H1 (cell line): ENCODE measurements at regions of chr15 and their contacts with region 1.

Region 1: DNA sequence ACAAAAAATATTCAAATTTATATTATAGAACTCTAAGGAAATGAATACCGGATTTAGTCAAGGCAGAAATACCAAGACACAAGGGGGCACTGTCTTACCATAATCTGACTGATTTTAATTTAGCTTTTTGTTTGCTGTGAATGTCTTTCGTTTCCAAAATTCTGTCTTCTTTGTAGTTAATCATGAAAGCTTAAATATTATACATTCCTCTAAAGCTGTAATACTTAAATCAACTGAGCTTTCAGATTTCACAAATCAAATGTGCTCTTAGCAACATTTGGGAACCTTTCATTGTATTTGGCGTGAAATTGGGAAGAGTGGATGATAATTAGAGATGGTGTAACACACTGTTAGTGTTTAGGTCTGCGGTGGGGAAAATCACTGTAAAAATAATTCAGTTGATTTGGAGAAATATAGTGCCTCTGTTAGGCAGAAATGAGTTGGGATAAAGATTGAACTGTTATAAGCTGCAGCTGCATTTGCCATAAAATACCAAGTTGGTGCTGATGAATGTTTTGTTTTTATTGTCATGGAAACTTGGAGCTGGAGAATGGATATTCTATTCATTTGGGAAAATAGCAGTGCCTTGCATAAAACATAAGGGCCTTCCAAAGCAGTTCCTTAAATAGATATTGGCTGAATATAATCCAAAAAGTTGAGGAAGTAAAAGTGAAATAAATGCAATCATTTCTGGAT is 228.2 kb downstream of the TCF12 start:
- DNase-seq: no peak
- H3K4me3 ChIP-seq: no peak overlapping the region
- H3K27ac ChIP-seq: no peak overlapping the region
- H3K4me1 ChIP-seq: no peaks in the 10 kb centered on the region; a peak in 3 of 7 replicates
- H3K27me3 ChIP-seq: no peaks in the 10 kb centered on the region
- CTCF ChIP-seq: peak in 2 of 3 experiments; percentile 47 to 51; a peak in 2 of 4 replicates
- EP300 ChIP-seq: no peak
- POLR2A ChIP-seq: no peak
- RAD21 ChIP-seq: peak; percentile 75 to 86

Region 2: DNA sequence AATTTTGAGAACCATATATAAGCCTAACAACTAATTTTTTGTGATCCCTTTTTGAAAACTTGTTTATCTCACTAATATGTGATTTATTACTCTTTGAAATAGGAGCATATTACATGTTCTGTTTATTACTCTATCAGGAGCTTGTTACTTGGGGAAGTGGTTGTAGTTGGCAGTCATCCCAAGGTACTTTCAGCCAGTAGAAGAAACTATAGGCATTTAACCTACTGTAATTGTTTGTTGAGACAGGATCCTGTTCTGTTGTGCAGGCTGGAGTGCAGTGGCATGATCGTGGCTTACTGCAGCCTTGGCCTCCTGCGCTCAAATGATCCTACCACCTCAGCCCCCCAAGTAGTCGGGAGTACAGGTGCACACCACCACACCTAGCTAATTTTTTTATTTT is 32.6 kb before region 1 on chr15:
- CTCF ChIA-PET with region 1: no interaction called
- POLR2A ChIA-PET with region 1: no interaction called
- DNase-seq: no peak
- H3K4me3 ChIP-seq: no peak overlapping the region
- H3K27ac ChIP-seq: no peak overlapping the region
- H3K4me1 ChIP-seq: peaks cover 0 to 10% (median 4%) of the 10 kb centered on the region in 4 experiments; a peak in 3 of 7 replicates
- H3K27me3 ChIP-seq: no peaks in the 10 kb centered on the region
- CTCF ChIP-seq: no peak
- EP300 ChIP-seq: no peak
- POLR2A ChIP-seq: no peak
- RAD21 ChIP-seq: no peak

Region 3: DNA sequence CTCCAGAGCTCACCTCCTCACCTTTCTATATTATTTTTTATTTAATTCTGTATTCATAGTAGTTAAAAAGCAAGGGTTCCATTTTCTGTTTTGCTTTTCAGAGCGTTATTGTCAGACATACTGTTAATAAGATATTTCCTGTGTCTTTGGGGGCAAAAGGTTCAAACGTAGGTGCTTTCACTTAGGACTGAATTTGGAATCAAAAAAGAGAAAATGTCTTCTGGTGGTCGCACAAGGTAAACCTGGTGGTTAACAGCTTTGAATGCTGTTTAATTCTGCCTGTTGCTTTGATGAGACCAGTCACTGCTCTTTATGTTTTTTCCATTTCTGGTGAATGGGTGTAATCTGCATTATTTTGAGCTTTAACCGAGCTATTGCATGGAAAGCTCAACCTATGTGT is 15.7 kb before region 1 on chr15:
- CTCF ChIA-PET with region 1: interaction called, 11 read pairs
- POLR2A ChIA-PET with region 1: no interaction called
- DNase-seq: no peak
- H3K4me3 ChIP-seq: no peak overlapping the region
- H3K27ac ChIP-seq: no peak overlapping the region
- H3K4me1 ChIP-seq: peaks cover 2 to 26% (median 13%) of the 10 kb centered on the region in 4 experiments
- H3K27me3 ChIP-seq: no peaks in the 10 kb centered on the region
- CTCF ChIP-seq: no peak
- EP300 ChIP-seq: no peak
- POLR2A ChIP-seq: no peak
- RAD21 ChIP-seq: no peak

Region 4: GRCh38 chr15:57158589-57158988 is 11.9 kb after region 1 on chr15:
- CTCF ChIA-PET with region 1: interaction called, 17 read pairs
- POLR2A ChIA-PET with region 1: interaction called, 5 read pairs
- DNase-seq: no peak
- H3K4me3 ChIP-seq: no peak overlapping the region
- H3K27ac ChIP-seq: no peak overlapping the region
- H3K4me1 ChIP-seq: peaks cover 0 to 3% (median 0%) of the 10 kb centered on the region in 4 experiments; a peak in 3 of 7 replicates
- H3K27me3 ChIP-seq: no peaks in the 10 kb centered on the region
- CTCF ChIP-seq: no peak
- EP300 ChIP-seq: no peak
- POLR2A ChIP-seq: no peak
- RAD21 ChIP-seq: no peak

Region 5: DNA sequence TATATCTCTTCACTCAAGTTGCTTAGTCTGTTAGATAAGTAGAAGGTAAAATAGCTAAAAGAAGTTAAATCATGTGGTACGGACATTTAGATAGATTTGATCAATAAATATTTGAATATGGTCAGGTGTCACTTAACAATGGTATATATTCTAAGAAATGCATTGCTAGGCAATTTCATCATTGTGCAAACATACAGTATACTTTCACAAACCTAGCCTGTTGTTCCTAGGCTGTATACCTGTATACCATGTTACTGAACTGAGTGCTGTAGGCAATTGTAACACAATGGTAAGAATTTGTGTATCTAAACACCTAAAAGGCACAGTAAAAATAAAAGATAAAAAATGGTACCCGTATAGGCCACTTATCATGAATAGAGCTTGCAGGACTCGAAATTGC is 116.9 kb after region 1 on chr15:
- CTCF ChIA-PET with region 1: interaction called, 10 read pairs
- POLR2A ChIA-PET with region 1: interaction called, 3 read pairs
- DNase-seq: no peak
- H3K4me3 ChIP-seq: no peak overlapping the region
- H3K27ac ChIP-seq: no peak overlapping the region
- H3K4me1 ChIP-seq: peaks cover 0 to 2% (median 0%) of the 10 kb centered on the region in 4 experiments; a peak in 1 of 7 replicates
- H3K27me3 ChIP-seq: no peaks in the 10 kb centered on the region
- CTCF ChIP-seq: no peak
- EP300 ChIP-seq: no peak
- POLR2A ChIP-seq: no peak
- RAD21 ChIP-seq: no peak

Region 6: GRCh38 chr15:57306161-57306943 is 159.7 kb after region 1 on chr15:
- CTCF ChIA-PET with region 1: interaction called, 58 read pairs
- POLR2A ChIA-PET with region 1: interaction called, 10 read pairs
- DNase-seq: peak; percentile 75 to 100
- H3K4me3 ChIP-seq: peak overlapping the region; percentile 33 to 69 (median 60)
- H3K27ac ChIP-seq: peak overlapping the region; percentile 49; the same call in 1 of the 2 replicates
- H3K4me1 ChIP-seq: peaks cover 5 to 14% (median 10%) of the 10 kb centered on the region in 4 experiments
- H3K27me3 ChIP-seq: no peaks in the 10 kb centered on the region
- CTCF ChIP-seq: peak; percentile 75 to 86 (median 82)
- EP300 ChIP-seq: no peak
- POLR2A ChIP-seq: peak in 1 of 2 experiments; percentile 65; a peak in 2 of 3 replicates
- RAD21 ChIP-seq: peak; percentile 84 to 90